Naive thymus-derived CD4-positive, alpha-beta T cell (primary cell): ENCODE measurements at regions of chr5 and their contacts with region 1.

Region 1: GRCh38 chr5:1385395-1386273 is 40.7 kb upstream of the CLPTM1L start:
- DNase-seq: peak; percentile 67 to 89 (median 78)
- ATAC-seq: peak; percentile 91
- H3K4me3 ChIP-seq: peak overlapping the region; percentile 94
- H3K4me3 Mint-ChIP-seq: peak overlapping the region; percentile 90 to 100 (median 98)
- H3K27ac ChIP-seq: peak overlapping the region; percentile 98
- H3K27ac Mint-ChIP-seq: peak overlapping the region; percentile 98 to 100 (median 99)
- H3K4me1 ChIP-seq: peaks cover 13 to 24% of the 10 kb centered on the region in 2 donors
- H3K4me1 Mint-ChIP-seq: peaks cover 17 to 44% (median 26%) of the 10 kb centered on the region in 7 donors
- H3K27me3 ChIP-seq: no peaks in the 10 kb centered on the region
- H3K27me3 Mint-ChIP-seq: peaks cover 0 to 17% (median 0%) of the 10 kb centered on the region in 5 donors

Region 2: DNA sequence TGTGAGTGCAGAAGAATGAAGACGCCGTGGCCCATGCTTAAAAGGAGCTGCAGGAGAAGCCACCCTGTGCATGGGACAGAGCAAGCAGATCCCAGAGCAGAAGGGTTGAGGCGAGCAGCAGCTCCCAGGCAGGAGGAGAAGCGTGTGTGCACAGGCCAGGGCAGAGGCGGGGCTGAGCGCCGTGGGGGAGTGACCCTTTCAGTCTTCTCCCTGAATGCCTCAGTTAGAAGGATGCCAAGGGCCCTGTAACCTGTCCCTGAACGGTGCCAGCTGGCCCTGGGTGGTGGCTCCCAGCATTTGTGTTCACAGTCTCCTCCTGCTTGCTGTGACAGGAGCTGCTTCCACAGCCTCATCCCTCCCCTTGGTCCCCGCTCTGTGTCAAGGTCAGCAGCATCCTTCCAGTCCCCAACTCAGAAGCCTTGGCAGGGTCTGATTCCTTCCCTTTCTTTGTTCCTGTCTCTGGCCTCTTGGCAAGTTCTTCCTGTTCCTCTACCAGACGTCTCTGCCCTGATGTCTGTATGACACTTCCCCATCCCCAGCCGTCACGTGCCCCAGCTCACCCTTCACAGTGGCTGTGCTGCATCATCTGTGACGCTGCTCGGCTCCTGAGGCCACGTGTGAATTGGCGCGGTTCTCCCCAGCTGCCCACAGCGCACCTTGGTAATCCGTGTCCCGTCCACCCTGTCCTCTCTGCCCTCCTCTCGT is 937.4 kb before region 1 on chr5:
- CTCF ChIA-PET with region 1: no interaction called
- POLR2A ChIA-PET with region 1: no interaction called
- intact Hi-C with region 1: no loop called
- DNase-seq: peak in 1 of 9 donors; percentile 17
- ATAC-seq: peak; percentile 86
- H3K4me3 ChIP-seq: no peak overlapping the region
- H3K4me3 Mint-ChIP-seq: peak overlapping the region in 1 of 10 donors; percentile 4
- H3K27ac ChIP-seq: no peak overlapping the region
- H3K27ac Mint-ChIP-seq: peak overlapping the region in 2 of 9 donors; percentile 21 to 49
- H3K4me1 ChIP-seq: peaks cover 12 to 18% of the 10 kb centered on the region in 2 donors
- H3K4me1 Mint-ChIP-seq: peaks cover 37 to 69% (median 55%) of the 10 kb centered on the region in 7 donors
- H3K27me3 ChIP-seq: no peaks in the 10 kb centered on the region
- H3K27me3 Mint-ChIP-seq: no peaks in the 10 kb centered on the region

Region 3: DNA sequence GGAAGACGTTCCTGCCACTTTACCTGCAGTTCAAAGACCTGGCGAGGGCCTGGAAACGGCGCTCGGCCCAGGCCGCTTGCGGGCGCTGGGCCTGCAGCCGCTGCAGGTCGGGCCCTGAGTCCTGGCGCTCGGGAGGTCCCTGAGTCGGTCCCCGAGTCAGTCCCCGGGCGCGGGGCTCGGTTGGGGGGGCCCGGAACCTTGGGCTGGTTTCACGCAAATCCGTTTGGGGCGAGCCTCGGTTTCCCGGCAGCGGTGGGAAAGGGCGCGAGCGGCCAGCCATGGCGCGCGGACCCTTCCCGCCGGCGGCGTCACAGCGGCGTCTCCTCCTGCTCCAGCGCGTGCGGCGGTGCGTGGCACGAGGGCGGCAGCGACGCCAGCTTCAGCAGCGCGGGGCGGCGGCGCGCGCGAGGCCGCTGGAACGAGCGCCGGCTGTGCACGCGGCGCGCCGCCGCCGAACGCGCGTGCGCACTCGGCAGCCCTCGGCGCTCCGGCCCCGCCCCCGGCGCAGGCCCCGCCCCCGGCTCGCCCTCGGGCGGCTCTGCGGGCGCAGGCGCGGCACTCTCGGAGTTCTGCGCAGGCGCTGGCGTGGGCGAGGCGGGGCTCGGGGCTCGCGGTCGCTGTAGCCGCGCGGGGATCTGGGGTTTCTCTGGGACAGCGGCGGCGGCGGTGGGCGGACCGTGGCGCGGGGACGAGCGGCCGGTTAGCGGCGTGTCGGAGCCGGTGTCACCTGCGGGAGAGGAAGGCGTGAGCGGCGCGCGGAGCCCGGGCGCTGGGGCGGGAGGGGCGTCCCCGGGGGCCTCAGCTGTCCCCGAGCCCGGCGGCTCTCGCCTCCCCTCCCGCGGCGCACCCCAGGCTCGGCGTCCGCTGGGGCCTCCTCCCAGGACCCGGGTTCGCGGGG is 912.7 kb before region 1 on chr5:
- CTCF ChIA-PET with region 1: no interaction called
- POLR2A ChIA-PET with region 1: no interaction called
- intact Hi-C with region 1: loop called in 1 of 2 experiments (anchors 5 kb)
- DNase-seq: peak; percentile 82 to 97 (median 90)
- ATAC-seq: peak; percentile 89
- H3K4me3 ChIP-seq: peak overlapping the region; percentile 82
- H3K4me3 Mint-ChIP-seq: peak overlapping the region; percentile 80 to 91 (median 84)
- H3K27ac ChIP-seq: peak overlapping the region; percentile 95
- H3K27ac Mint-ChIP-seq: peak overlapping the region in 6 of 9 donors; percentile 15 to 89 (median 84)
- H3K4me1 ChIP-seq: peaks cover 14 to 18% of the 10 kb centered on the region in 2 donors
- H3K4me1 Mint-ChIP-seq: peaks cover 13 to 22% (median 19%) of the 10 kb centered on the region in 7 donors
- H3K27me3 ChIP-seq: peaks cover 0 to 3% of the 10 kb centered on the region in 2 donors
- H3K27me3 Mint-ChIP-seq: peaks cover 0 to 10% (median 8%) of the 10 kb centered on the region in 5 donors

Region 4: GRCh38 chr5:1111727-1112289 is 273.8 kb before region 1 on chr5 and contains the start of gene SLC12A7:
- CTCF ChIA-PET with region 1: no interaction called
- POLR2A ChIA-PET with region 1: no interaction called
- intact Hi-C with region 1: loop called in 1 of 2 experiments (anchors 5 kb)
- DNase-seq: peak; percentile 43 to 80 (median 58)
- ATAC-seq: peak; percentile 74
- H3K4me3 ChIP-seq: peak within 1 kb of the TSS; percentile 61
- H3K4me3 Mint-ChIP-seq: peak within 1 kb of the TSS; percentile 87 to 93 (median 88)
- H3K27ac ChIP-seq: peak within 1 kb of the TSS; percentile 83
- H3K27ac Mint-ChIP-seq: peak within 1 kb of the TSS; percentile 73 to 92 (median 86)
- H3K4me1 ChIP-seq: peaks cover 5 to 30% of the 10 kb centered on the region in 2 donors
- H3K4me1 Mint-ChIP-seq: peaks cover 20 to 41% (median 35%) of the 10 kb centered on the region in 7 donors
- H3K27me3 ChIP-seq: no peaks in the 10 kb centered on the region
- H3K27me3 Mint-ChIP-seq: no peaks in the 10 kb centered on the region
- total RNA-seq, gene SLC12A7: 45.3 to 101 (median 64.5) TPM

Region 5: GRCh38 chr5:1294835-1295649 is 90.6 kb before region 1 on chr5 and contains the start of gene TERT:
- CTCF ChIA-PET with region 1: no interaction called
- POLR2A ChIA-PET with region 1: interaction called, 5 read pairs
- intact Hi-C with region 1: loop called in 1 of 2 experiments (anchors 1 kb)
- DNase-seq: peak; percentile 50 to 81 (median 74)
- ATAC-seq: peak; percentile 91
- H3K4me3 ChIP-seq: no peak within 1 kb of the TSS
- H3K4me3 Mint-ChIP-seq: peak within 1 kb of the TSS in 9 of 10 donors; percentile 45 to 66 (median 59)
- H3K27ac ChIP-seq: no peak within 1 kb of the TSS
- H3K27ac Mint-ChIP-seq: no peak within 1 kb of the TSS
- H3K4me1 ChIP-seq: peaks cover 0 to 11% of the 10 kb centered on the region in 2 donors
- H3K4me1 Mint-ChIP-seq: peaks cover 0 to 15% (median 4%) of the 10 kb centered on the region in 7 donors
- H3K27me3 ChIP-seq: no peaks in the 10 kb centered on the region
- H3K27me3 Mint-ChIP-seq: peaks cover 0 to 6% (median 0%) of the 10 kb centered on the region in 5 donors
- total RNA-seq, gene TERT: 0.13 to 3.3 (median 1.8) TPM

Region 6: DNA sequence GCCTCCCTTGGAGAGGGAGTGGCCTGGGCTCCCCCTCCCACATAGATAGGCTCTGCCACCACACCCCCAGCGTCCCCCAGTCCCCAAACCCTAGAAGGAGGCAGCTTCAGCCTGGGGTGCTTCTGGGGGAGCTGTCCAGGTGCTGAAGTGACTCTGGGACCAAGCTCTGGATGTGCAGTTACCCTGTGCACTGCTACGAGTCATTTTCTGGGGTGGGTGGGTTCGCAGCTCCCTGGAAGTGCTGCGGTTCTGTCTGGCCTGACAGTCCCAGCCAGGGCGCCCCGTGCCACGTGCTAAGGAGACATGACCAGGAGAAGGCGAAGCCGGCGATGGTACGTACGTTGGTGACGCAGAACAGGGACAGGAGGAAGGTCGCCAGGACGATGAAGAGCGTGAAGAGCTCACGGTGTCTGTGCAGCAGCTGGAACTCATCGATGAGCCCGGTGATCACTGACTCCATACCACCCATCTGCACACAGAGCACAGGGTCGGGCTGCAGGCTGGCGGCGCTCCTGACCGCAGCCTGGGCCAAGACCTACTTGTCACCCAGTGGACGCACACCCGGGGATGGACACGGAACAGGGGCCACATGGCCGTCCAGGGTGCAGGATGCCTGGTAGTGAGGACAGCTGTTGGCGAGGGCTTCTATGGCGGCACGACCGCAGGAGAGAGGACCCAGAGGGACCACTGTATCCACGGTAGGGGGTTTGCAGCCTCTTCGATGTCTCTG is 23.9 kb after region 1 on chr5:
- CTCF ChIA-PET with region 1: no interaction called
- POLR2A ChIA-PET with region 1: no interaction called
- intact Hi-C with region 1: loop called in 1 of 2 experiments (anchors 1 kb)
- DNase-seq: peak in 4 of 9 donors; percentile 14 to 31 (median 18)
- ATAC-seq: peak; percentile 35
- H3K4me3 ChIP-seq: no peak overlapping the region
- H3K4me3 Mint-ChIP-seq: no peak overlapping the region
- H3K27ac ChIP-seq: no peak overlapping the region
- H3K27ac Mint-ChIP-seq: peak overlapping the region in 1 of 9 donors; percentile 33
- H3K4me1 ChIP-seq: no peaks in the 10 kb centered on the region
- H3K4me1 Mint-ChIP-seq: no peaks in the 10 kb centered on the region
- H3K27me3 ChIP-seq: no peaks in the 10 kb centered on the region
- H3K27me3 Mint-ChIP-seq: peaks cover 0 to 42% (median 20%) of the 10 kb centered on the region in 5 donors

Region 7: DNA sequence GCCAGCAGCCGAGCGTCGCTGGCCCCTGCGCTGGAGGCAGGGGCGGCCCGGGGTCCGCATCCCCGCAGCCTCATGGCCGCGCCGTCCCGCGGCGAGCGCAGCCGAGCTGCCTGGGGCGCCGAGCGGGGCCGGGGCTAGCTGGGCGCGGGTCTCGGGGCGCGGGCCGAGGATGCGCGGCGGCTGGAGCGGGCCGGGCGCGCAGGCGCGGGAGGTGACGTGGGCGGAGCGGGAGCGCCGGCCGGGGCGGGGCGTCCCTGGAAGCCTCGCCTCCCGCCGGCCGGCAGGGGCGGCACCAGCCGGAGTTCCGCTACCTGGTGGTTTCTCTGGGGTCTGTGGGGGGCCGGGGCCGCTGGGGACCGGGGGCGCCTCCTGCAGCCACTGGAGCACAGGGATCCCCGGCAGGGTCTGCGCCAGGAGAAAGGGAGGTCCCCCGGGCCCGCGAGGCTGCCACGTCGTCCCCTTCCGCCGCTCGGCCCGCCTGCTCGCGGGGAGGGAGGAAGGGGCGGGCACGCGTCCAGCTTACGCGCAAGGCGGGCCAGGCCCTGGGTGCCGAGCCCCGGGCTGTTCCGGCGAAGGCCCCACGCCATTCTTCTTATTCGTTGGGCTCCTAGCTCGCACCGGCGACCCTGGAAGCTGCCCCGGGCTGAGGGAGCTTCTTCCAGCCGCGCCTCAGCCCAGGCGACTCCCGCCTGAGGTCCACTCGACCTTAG is 138.3 kb after region 1 on chr5 and contains the start of gene LPCAT1:
- CTCF ChIA-PET with region 1: no interaction called
- POLR2A ChIA-PET with region 1: no interaction called
- intact Hi-C with region 1: loop called (anchors 5 kb)
- DNase-seq: peak; percentile 44 to 91 (median 71)
- ATAC-seq: peak; percentile 93
- H3K4me3 ChIP-seq: peak within 1 kb of the TSS; percentile 61
- H3K4me3 Mint-ChIP-seq: peak within 1 kb of the TSS; percentile 73 to 89 (median 83)
- H3K27ac ChIP-seq: peak within 1 kb of the TSS; percentile 81
- H3K27ac Mint-ChIP-seq: peak within 1 kb of the TSS in 6 of 9 donors; percentile 33 to 77 (median 69)
- H3K4me1 ChIP-seq: peaks cover 13 to 31% of the 10 kb centered on the region in 2 donors
- H3K4me1 Mint-ChIP-seq: peaks cover 13 to 30% (median 19%) of the 10 kb centered on the region in 7 donors
- H3K27me3 ChIP-seq: no peaks in the 10 kb centered on the region
- H3K27me3 Mint-ChIP-seq: peaks cover 0 to 8% (median 0%) of the 10 kb centered on the region in 5 donors
- total RNA-seq, gene LPCAT1: 29.4 to 89.4 (median 49.7) TPM